CD8-positive, alpha-beta T cell (primary cell): ENCODE measurements at regions of chr11 and their contacts with region 1.

Region 1: DNA sequence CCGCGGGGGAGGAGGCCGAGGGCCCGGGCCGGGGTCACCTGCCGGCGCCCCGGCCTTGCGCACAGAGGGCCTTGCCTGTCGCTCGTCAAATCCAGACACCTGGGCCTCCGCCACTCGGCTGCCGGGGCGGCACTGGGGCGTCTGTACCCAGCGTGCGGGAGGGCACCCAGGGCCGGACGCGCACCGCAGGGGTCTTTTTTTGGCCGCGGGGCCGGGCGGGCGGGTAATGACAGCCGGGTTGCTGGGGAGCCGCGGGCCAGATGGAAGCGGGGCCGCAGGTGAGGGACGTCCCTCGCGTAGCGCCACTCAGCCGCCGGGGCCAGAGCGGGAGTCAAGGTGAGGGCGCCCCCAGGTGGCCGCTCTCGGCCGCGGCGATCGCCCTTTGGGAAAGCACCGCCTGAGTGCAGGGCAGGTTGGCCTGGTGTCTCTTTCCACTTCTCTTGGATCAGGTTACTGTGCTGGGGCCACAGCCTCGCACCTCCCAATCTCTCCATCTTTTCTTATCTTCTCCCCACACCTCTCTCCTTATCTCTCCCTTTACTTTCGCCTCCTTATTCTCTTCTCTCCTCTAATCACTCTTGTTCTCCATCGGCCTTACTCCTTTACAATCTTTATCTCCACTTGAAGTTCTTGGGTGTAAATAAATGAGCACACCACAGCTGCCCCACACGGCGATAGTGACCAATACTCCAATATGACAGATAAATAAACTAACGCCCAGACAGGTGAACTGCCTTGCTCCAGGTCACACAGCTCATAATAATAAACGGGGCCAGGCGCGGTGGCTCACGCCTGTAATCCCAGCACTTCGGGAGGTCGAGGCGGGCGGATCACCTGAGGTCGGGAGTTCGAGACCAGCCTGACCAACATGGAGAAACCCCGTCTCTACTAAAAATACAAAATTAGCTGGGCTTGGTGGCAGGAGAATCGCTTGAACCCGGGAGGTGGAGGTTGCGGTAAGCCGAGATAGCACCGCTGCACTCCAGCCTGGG is 3.7 kb downstream of the PHLDB1 start:
- DNase-seq: peak; percentile 64 to 91 (median 85)
- ATAC-seq: peak; percentile 34
- H3K4me3 ChIP-seq: peak overlapping the region; percentile 40 to 61
- H3K4me3 Mint-ChIP-seq: peak overlapping the region; percentile 78
- H3K27ac ChIP-seq: no peak overlapping the region
- H3K27ac Mint-ChIP-seq: no peak overlapping the region
- H3K4me1 ChIP-seq: peaks cover 28% of the 10 kb centered on the region
- H3K4me1 Mint-ChIP-seq: peaks cover 25% of the 10 kb centered on the region
- H3K27me3 ChIP-seq: peaks cover 0 to 13% of the 10 kb centered on the region in 2 experiments
- H3K27me3 Mint-ChIP-seq: no peaks in the 10 kb centered on the region
- CTCF ChIP-seq: peak; percentile 85

Region 2: DNA sequence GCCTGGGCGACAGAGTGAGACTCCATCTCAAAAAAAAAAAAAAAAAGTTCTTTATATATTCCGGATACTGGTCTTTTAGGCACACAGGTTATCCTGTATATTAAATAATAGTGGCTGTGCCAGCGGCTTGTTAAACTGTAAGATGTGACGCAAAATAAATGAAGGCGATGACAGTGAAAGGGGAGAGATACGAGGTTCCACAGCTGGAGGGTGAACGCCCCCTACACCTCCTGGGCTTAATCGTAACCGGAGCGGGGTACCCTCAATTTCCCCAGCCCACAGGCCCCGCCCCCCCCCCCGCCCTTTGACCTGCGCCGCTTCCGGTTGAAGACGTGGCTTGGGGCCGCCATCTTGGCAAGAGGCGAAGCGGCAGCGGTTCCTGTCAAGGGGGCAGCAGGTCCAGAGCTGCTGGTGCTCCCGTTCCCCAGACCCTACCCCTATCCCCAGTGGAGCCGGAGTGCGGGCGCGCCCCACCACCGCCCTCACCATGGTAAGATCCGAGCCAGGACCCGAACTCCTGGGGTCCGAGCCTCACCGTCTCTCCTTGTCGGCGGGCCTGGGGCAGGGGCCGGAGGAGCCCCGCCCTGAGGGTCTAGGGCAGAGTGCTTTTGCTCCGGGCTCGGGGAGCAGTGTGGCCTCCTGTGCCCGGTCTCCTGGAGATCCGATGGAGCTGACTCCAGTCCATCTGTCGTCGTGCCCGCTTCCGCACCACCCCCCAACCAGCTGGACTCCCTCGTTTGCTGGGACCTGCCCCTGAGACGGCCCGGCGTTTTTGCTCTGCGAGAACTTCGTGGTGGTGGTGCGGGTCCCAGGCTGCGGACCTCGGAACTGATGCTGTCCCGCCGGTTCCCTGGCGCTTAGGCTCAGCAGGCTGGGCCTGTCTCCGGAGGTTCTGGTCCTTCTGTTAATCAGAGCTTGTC is 38.8 kb before region 1 on chr11 and contains the start of gene ARCN1:
- CTCF ChIA-PET with region 1: interaction called, 3 read pairs
- POLR2A ChIA-PET with region 1: interaction called, 9 read pairs
- intact Hi-C with region 1: loop called (anchors 2 kb)
- DNase-seq: peak; percentile 61 to 91 (median 77)
- ATAC-seq: peak; percentile 91
- H3K4me3 ChIP-seq: peak within 1 kb of the TSS; percentile 99 to 100
- H3K4me3 Mint-ChIP-seq: peak within 1 kb of the TSS; percentile 94
- H3K27ac ChIP-seq: peak within 1 kb of the TSS; percentile 96 to 99
- H3K27ac Mint-ChIP-seq: peak within 1 kb of the TSS; percentile 97
- H3K4me1 ChIP-seq: peaks cover 34% of the 10 kb centered on the region
- H3K4me1 Mint-ChIP-seq: peaks cover 49% of the 10 kb centered on the region
- H3K27me3 ChIP-seq: no peaks in the 10 kb centered on the region
- H3K27me3 Mint-ChIP-seq: no peaks in the 10 kb centered on the region
- CTCF ChIP-seq: no peak
- total RNA-seq, gene ARCN1: 77.8 to 81.2 TPM

Region 3: GRCh38 chr11:118592616-118593367 is 18.3 kb before region 1 on chr11:
- CTCF ChIA-PET with region 1: interaction called, 78 read pairs
- POLR2A ChIA-PET with region 1: interaction called, 13 read pairs
- intact Hi-C with region 1: loop called (anchors 1 kb)
- DNase-seq: no peak
- ATAC-seq: no peak
- H3K4me3 ChIP-seq: no peak overlapping the region
- H3K4me3 Mint-ChIP-seq: no peak overlapping the region
- H3K27ac ChIP-seq: no peak overlapping the region
- H3K27ac Mint-ChIP-seq: peak overlapping the region; percentile 18
- H3K4me1 ChIP-seq: peaks cover 5% of the 10 kb centered on the region
- H3K4me1 Mint-ChIP-seq: peaks cover 18% of the 10 kb centered on the region
- H3K27me3 ChIP-seq: no peaks in the 10 kb centered on the region
- H3K27me3 Mint-ChIP-seq: no peaks in the 10 kb centered on the region
- CTCF ChIP-seq: no peak

Region 4: DNA sequence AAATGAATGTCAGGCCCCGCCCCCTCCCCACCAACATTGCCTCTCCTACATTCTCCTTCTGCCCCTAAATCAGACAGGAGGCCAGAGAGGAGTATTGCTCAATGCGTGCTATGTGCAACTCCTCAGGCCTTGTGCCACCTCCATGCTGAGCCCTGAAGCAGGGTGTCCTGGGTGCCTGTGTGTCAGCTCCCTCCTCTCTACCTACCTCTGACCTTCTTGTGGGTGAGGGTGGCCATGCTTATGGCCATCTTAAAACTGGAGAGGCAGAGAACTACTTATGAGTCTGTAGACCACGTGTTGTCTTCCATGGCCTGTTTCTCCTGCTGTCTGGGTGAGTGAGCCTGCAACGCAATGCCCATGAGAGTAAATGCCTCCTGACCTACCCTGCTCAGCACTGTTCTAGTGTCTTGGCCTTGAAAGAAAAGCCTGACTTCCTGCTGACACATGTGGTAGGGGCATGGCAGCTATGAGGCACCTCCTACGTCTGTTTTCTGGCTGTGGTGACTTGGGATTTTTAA is 695.3 kb after region 1 on chr11:
- CTCF ChIA-PET with region 1: no interaction called
- POLR2A ChIA-PET with region 1: no interaction called
- intact Hi-C with region 1: loop called in 1 of 2 experiments (anchors 10 kb)
- DNase-seq: peak in 4 of 9 experiments; percentile 61 to 83 (median 72)
- ATAC-seq: peak; percentile 95
- H3K4me3 ChIP-seq: no peak overlapping the region
- H3K4me3 Mint-ChIP-seq: peak overlapping the region; percentile 74
- H3K27ac ChIP-seq: peak overlapping the region; percentile 32 to 42
- H3K27ac Mint-ChIP-seq: peak overlapping the region; percentile 99
- H3K4me1 ChIP-seq: peaks cover 30% of the 10 kb centered on the region
- H3K4me1 Mint-ChIP-seq: peaks cover 35% of the 10 kb centered on the region
- H3K27me3 ChIP-seq: no peaks in the 10 kb centered on the region
- H3K27me3 Mint-ChIP-seq: no peaks in the 10 kb centered on the region
- CTCF ChIP-seq: no peak